CD14-positive monocyte (primary cell): ENCODE measurements at regions of chr4 and their contacts with region 1.

Region 1: GRCh38 chr4:48269861-48270522 is 354 bp upstream of the TEC start:
- DNase-seq: peak; percentile 82 to 89 (median 84)
- H3K4me3 ChIP-seq: peak overlapping the region; percentile 89 to 96 (median 92)
- H3K4me3 Mint-ChIP-seq: peak overlapping the region; percentile 97 to 98
- H3K27ac ChIP-seq: peak overlapping the region; percentile 89 to 94
- H3K27ac Mint-ChIP-seq: peak overlapping the region; percentile 91 to 98 (median 95)
- H3K4me1 ChIP-seq: peaks cover 39 to 49% of the 10 kb centered on the region in 2 donors
- H3K4me1 Mint-ChIP-seq: peaks cover 42% of the 10 kb centered on the region
- H3K27me3 ChIP-seq: no peaks in the 10 kb centered on the region
- H3K27me3 Mint-ChIP-seq: peaks cover 0 to 3% (median 0%) of the 10 kb centered on the region in 3 donors
- CTCF ChIP-seq: no peak

Region 2: DNA sequence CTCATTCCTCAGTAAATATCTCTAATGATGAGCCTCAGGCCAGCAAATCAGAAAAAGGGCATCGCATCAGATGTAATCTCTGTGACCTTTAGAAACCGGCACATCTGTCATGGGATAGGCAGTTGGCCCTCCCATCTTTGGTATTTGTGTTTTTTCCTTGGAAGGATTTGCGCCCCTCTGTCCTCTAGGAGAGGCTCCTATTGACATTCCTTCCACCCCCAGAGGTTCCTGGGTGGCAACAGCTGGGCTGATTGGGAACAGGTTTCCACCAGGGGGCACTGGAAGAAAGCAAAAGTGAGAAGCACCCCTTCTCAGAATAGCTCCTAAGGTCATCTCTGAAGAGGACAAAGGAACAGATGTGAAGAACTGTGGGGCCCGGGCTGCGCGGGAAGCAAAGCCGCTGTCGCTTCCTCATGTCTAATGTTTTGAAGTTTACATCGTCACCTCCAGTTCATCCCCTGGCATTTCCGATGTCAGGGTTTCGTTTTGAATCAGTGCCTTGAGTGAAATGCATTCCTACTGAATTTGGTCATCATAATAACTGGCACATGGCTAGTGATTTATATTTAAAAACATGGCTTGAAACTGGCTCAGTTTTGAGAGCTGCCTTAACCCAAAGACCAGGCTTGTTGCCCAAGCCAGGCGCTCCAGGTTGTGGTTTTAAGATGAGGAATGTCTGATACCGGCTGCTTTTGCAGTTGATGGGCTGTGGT is 142.2 kb before region 1 on chr4:
- intact Hi-C with region 1: loop called in 1 of 2 experiments (anchors 10 kb)
- DNase-seq: peak; percentile 35 to 50 (median 36)
- H3K4me3 ChIP-seq: peak overlapping the region in 1 of 3 experiments; percentile 19
- H3K4me3 Mint-ChIP-seq: peak overlapping the region in 1 of 2 donors; percentile 78
- H3K27ac ChIP-seq: no peak overlapping the region
- H3K27ac Mint-ChIP-seq: peak overlapping the region in 1 of 7 donors; percentile 43
- H3K4me1 ChIP-seq: peaks cover 7% of the 10 kb centered on the region in 2 donors
- H3K4me1 Mint-ChIP-seq: peaks cover 18% of the 10 kb centered on the region
- H3K27me3 ChIP-seq: no peaks in the 10 kb centered on the region
- H3K27me3 Mint-ChIP-seq: peaks cover 0 to 3% (median 2%) of the 10 kb centered on the region in 3 donors
- CTCF ChIP-seq: peak; percentile 61

Region 3: GRCh38 chr4:48227659-48228058 is 42.3 kb before region 1 on chr4:
- intact Hi-C with region 1: loop called in 1 of 2 experiments (anchors 10 kb)
- DNase-seq: peak; percentile 56 to 60 (median 56)
- H3K4me3 ChIP-seq: no peak overlapping the region
- H3K4me3 Mint-ChIP-seq: no peak overlapping the region
- H3K27ac ChIP-seq: peak overlapping the region; percentile 24 to 47
- H3K27ac Mint-ChIP-seq: peak overlapping the region; percentile 69 to 89 (median 77)
- H3K4me1 ChIP-seq: peaks cover 40 to 60% of the 10 kb centered on the region in 2 donors
- H3K4me1 Mint-ChIP-seq: peaks cover 58% of the 10 kb centered on the region
- H3K27me3 ChIP-seq: no peaks in the 10 kb centered on the region
- H3K27me3 Mint-ChIP-seq: no peaks in the 10 kb centered on the region
- CTCF ChIP-seq: no peak

Region 4: GRCh38 chr4:48340965-48341775 is 71.2 kb after region 1 on chr4 and contains the start of gene SLAIN2:
- intact Hi-C with region 1: loop called (anchors 5 kb)
- DNase-seq: peak; percentile 95
- H3K4me3 ChIP-seq: peak within 1 kb of the TSS; percentile 83 to 87 (median 87)
- H3K4me3 Mint-ChIP-seq: peak within 1 kb of the TSS; percentile 96 to 97
- H3K27ac ChIP-seq: peak within 1 kb of the TSS; percentile 89
- H3K27ac Mint-ChIP-seq: peak within 1 kb of the TSS; percentile 94 to 99 (median 98)
- H3K4me1 ChIP-seq: peaks cover 26 to 34% of the 10 kb centered on the region in 2 donors
- H3K4me1 Mint-ChIP-seq: peaks cover 46% of the 10 kb centered on the region
- H3K27me3 ChIP-seq: no peaks in the 10 kb centered on the region
- H3K27me3 Mint-ChIP-seq: peaks cover 0 to 2% (median 1%) of the 10 kb centered on the region in 3 donors
- CTCF ChIP-seq: peak; percentile 39
- polyA plus RNA-seq, gene SLAIN2: 13.9 to 24.1 (median 17.6) TPM